Esophagus muscularis mucosa (tissue), 4 donors: ENCODE measurements at regions of chr2 and their contacts with region 1.

Region 1: GRCh38 chr2:37832590-37833197 is 92.4 kb upstream of the RMDN2 start:
- DNase-seq: peak; percentile 96
- H3K4me3 ChIP-seq: no peak overlapping the region
- H3K27ac ChIP-seq: peak overlapping the region in 3 of 4 donors; percentile 20 to 61 (median 48)
- H3K4me1 ChIP-seq: peaks cover 6 to 57% (median 39%) of the 10 kb centered on the region in 4 donors
- H3K27me3 ChIP-seq: no peaks in the 10 kb centered on the region
- CTCF ChIP-seq: peak; percentile 82 to 90 (median 84)
- EP300 ChIP-seq: no peak
- POLR2A ChIP-seq: no peak

Region 2: DNA sequence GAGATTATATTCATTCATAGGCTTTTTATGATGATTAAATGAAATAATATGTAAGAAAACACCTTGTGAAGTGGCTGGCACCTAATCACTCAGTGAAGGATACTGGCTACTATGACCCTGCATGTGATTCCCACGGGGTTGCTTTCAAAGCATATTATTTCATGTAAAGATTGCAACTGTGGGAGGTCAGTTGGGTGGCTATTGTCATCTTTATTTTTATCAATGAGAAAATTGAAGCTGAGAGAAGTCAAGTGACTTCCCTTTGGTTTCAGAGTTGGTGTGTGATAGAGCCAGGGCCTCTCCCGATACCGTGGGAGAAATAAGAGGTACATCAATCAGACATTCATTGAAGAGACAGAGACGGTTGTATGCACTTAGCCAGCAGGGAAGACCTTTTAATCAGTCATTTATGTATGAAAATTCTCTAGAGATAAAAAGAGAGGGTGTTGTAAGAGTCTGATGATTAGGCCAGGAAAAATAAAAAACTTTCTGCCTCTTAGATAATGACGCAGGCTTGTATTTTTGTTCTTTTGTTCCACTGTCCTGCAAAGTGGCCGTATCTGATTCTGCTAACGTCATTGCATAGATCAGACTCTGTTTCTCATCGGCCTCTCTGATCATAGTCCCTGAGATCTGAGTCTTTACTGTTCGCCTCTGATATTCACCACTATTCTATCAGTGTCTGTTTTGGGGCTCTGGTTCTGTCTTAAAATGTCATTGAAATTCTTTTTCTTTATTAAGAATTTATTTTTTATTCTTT is 437.7 kb before region 1 on chr2:
- intact Hi-C with region 1: loop called (anchors 5 kb)
- DNase-seq: no peak
- H3K4me3 ChIP-seq: no peak overlapping the region
- H3K27ac ChIP-seq: no peak overlapping the region
- H3K4me1 ChIP-seq: peaks cover under 1 to 22% (median 9%) of the 10 kb centered on the region in 4 donors
- H3K27me3 ChIP-seq: no peaks in the 10 kb centered on the region
- CTCF ChIP-seq: no peak
- EP300 ChIP-seq: no peak
- POLR2A ChIP-seq: no peak

Region 3: GRCh38 chr2:37414470-37414949 is 418.2 kb before region 1 on chr2:
- intact Hi-C with region 1: loop called (anchors 1 kb)
- DNase-seq: no peak
- H3K4me3 ChIP-seq: no peak overlapping the region
- H3K27ac ChIP-seq: peak overlapping the region; percentile 47 to 70 (median 57)
- H3K4me1 ChIP-seq: peaks cover 13 to 29% (median 26%) of the 10 kb centered on the region in 4 donors
- H3K27me3 ChIP-seq: no peaks in the 10 kb centered on the region
- CTCF ChIP-seq: peak; percentile 80 to 90 (median 82)
- EP300 ChIP-seq: no peak
- POLR2A ChIP-seq: no peak

Region 4: GRCh38 chr2:37561615-37562569 is 270.8 kb before region 1 on chr2:
- intact Hi-C with region 1: no loop called
- DNase-seq: peak; percentile 12
- H3K4me3 ChIP-seq: no peak overlapping the region
- H3K27ac ChIP-seq: peak overlapping the region in 1 of 4 donors; percentile 35
- H3K4me1 ChIP-seq: peaks cover 11 to 64% (median 42%) of the 10 kb centered on the region in 4 donors
- H3K27me3 ChIP-seq: no peaks in the 10 kb centered on the region
- CTCF ChIP-seq: no peak
- EP300 ChIP-seq: no peak
- POLR2A ChIP-seq: no peak

Region 5: DNA sequence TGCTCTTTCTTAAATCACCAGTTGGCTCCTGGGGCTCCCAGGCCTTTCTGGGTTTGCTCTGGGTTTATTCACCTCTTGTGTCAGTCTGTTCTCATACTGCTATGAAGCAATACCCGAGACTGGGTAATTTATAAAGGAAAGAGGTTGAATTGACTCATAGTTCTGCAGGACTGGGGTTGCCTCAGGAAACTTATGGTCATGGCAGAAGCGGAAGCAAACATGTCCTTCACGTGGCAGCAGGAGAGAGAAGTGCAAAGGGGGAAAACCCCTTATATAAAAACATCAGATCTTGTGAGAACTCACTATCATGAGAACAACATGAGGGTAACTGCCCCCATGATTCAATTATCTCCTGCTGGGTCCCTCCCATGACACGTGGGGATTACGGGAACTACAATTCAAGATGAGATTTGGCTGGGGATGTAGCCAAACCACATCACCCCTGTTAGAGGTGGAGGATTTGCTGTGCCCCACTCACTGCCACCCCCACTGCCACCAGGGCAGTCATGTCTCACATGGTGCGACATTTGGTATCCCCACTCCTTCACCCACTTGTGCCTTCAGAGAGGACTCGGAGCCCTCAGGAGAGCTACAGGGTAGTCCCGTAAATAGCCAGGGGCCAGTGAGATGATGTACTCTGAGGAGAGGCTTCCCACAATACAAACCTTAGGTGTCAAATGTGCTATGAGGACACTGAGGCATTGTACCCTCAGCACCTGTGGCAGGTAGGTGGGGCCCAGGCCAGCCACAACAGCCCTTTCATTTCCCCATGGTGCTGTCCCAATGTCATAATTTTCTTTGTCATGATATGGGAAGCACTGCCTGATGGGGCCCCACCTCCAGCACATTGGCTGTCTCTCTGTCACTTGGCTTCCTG is 197.0 kb before region 1 on chr2:
- intact Hi-C with region 1: no loop called
- DNase-seq: no peak
- H3K4me3 ChIP-seq: no peak overlapping the region
- H3K27ac ChIP-seq: no peak overlapping the region
- H3K4me1 ChIP-seq: peaks cover 0 to 16% (median 5%) of the 10 kb centered on the region in 4 donors
- H3K27me3 ChIP-seq: no peaks in the 10 kb centered on the region
- CTCF ChIP-seq: no peak
- EP300 ChIP-seq: no peak
- POLR2A ChIP-seq: no peak

Region 6: DNA sequence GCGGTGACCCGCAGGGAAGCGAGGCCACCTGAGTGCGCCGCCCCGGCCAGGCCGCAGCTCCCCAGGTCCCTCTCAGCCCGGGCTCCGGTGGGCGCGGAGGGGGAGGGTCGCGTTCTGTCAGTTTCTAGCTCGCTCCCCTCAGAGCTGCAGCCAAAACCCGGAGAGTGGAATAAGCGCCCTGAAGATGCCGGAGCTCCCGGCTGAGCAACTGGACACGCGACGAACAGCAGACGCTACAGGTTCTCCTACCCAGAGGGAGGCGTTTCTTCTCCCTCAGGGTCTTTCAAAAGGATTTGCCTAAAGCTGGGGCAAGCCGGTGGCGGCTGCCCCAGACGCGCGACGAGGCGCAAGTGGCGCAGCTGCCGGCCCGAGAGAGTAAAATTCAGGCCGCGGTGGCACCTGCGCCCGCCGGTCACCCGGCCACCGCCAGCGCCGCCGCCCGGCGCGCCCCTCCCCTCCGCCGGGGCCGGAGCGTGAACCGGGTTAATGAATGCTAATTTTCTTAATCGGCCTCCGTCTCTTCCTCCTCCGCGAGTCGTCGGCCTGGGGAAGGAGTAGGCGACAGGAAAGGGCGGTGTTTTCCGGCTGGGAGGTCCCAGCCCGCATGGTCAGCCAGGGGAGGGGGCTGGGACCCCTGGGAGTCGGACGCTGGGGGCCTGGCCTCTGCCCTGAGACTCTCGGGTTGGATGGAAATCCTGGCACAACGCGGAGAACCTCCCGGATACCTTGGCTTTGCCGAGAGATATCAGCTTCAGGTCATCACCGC is 160.4 kb before region 1 on chr2:
- intact Hi-C with region 1: loop called (anchors 5 kb)
- DNase-seq: no peak
- H3K4me3 ChIP-seq: peak overlapping the region; percentile 85 to 97 (median 92)
- H3K27ac ChIP-seq: peak overlapping the region; percentile 95 to 98 (median 96)
- H3K4me1 ChIP-seq: peaks cover 14 to 41% (median 31%) of the 10 kb centered on the region in 4 donors
- H3K27me3 ChIP-seq: no peaks in the 10 kb centered on the region
- CTCF ChIP-seq: peak in 1 of 3 experiments; percentile 8
- EP300 ChIP-seq: no peak
- POLR2A ChIP-seq: no peak

Region 7: DNA sequence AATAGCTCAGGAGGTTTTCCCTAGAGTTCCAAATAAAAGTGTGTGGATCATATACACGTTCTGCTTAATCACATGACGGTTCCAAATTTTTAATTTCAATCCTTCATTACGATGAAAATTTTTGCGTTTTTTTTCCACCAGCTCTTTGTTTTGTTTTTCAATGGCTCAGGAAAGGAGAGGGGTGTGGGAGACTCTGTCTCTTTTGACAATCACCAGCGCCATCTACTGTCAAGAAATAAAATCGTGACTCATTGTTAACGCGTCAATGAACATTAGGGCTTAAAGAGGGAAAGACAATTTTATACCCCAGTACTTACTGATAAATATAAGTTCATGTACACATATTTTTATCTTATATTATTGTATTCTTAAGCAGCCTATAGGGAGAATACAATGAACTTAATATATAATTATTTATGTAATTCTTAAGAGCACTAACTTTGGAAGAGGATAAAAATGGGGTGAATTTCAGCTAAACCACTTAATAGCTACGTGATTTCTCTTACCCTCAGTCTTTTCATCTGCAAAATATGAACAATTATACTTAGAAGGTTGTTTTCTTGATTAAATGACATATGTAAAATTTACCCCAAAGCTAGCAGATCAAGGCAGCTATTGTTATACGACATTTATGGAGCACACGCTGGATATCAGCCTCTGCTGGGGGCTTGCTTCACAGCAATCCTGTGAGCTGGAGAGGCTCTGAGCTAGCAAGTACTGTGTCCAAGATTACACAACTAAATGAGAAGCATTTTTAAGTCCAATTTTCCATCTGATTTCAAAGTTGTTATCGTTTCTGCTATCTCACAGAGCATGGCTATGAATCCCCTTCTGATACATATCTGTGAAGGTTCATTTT is 45.0 kb after region 1 on chr2:
- intact Hi-C with region 1: loop called (anchors 5 kb)
- DNase-seq: no peak
- H3K4me3 ChIP-seq: no peak overlapping the region
- H3K27ac ChIP-seq: no peak overlapping the region
- H3K4me1 ChIP-seq: peaks cover 13 to 40% (median 32%) of the 10 kb centered on the region in 4 donors
- H3K27me3 ChIP-seq: no peaks in the 10 kb centered on the region
- CTCF ChIP-seq: peak; percentile 76 to 83 (median 78)
- EP300 ChIP-seq: no peak
- POLR2A ChIP-seq: no peak